OCI-LY7 (cell line): ENCODE measurements at regions of chr7 and their contacts with region 1.

Region 1: GRCh38 chr7:65872776-65873581 is at the start of gene VKORC1L1:
- DNase-seq: peak; percentile 95
- H3K4me3 ChIP-seq: peak within 1 kb of the TSS; percentile 98
- H3K27ac ChIP-seq: peak within 1 kb of the TSS; percentile 66
- H3K4me1 ChIP-seq: peaks cover 10% of the 10 kb centered on the region
- CTCF ChIP-seq: no peak
- total RNA-seq, gene VKORC1L1: 12.1 and 17.4 TPM in 2 replicates

Region 2: DNA sequence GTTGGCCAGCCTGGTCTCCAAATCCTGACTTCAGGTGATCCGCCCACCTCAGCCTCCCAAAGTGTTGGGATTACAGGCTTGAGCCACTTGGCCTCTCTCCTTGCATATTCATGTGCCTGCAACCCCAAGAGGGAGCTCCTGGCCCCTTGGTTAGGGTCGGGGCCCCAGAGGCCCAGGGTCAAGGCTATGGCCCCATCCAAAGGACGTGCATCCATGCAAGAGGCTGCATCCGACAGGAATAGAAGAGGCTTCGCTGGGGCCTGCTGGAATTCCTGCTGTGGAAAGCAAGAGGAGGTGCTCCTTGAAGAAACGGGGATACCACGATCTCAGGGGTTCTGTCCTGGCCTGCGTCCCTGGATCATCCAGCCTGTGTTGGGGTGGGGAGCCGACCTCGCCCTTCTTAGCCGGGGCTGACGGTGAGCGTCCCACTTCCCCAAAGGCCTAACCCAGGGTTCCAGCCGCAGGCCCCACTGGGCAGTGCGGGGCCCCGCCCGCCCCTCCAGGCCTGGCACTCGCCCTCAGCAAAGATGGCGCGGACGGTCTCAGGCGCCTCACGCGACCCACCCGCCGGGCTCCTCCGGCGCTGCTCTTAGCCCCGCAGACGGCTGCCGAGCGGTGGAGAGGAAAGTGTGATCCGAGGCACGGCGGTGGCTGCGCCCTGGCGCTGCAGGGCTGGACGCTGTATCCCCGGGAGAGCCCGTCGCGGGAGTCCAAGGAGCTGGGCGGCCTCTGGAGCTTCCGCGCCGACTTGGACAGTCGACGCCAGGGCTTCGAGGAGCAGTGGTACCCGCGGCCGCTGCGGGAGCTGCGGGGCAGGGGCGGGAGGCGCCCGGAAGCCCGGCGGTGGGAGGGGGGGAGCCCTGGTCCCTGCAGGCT is 1773.1 kb before region 1 on chr7:
- CTCF ChIA-PET with region 1: no interaction called
- POLR2A ChIA-PET with region 1: no interaction called
- intact Hi-C with region 1: no loop called
- DNase-seq: no peak
- H3K4me3 ChIP-seq: no peak overlapping the region
- H3K27ac ChIP-seq: no peak overlapping the region
- H3K4me1 ChIP-seq: no peaks in the 10 kb centered on the region
- CTCF ChIP-seq: no peak

Region 3: DNA sequence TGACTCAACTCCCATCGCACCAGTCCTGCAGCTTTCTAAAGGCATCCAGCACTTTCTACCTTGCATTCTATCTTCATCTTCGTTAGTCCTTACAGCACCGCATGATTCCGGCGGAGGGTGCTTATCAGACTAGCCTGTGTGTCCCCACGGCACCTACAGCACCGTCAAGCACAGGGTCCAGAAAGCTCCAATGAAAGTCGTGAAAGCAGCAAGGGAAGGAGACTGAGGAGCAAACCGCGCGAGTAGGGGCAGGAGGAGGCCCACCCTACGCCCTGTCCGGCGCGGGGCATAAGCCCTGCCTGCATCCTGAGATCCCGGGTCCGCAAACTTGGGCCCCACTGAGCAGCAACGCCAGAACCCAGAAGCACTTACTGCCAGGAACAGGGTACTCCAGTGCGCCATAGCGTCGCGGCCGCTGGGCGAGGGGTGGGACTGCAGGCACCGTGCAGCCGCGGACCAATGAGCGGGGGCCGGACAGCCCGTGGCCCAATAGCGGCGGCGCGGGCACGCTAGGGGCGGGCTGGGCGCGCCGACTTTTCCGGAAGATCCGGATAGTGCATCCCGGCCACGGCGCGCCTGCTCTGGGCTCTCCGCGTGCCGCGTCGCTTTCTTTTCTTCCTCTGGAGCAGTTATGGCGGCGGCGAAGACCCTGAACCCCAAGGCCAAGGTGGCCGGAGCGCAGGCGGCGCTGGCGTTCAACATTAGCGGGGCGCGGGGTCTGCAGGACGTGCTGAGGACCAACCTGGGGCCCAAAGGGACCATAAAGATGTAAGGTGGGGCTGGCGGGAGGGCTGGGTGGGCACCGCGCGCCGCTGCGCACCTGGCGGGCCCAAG is 122.3 kb before region 1 on chr7:
- CTCF ChIA-PET with region 1: no interaction called
- POLR2A ChIA-PET with region 1: interaction called, 3 read pairs
- intact Hi-C with region 1: loop called (anchors 2 kb)
- DNase-seq: peak; percentile 92
- H3K4me3 ChIP-seq: peak overlapping the region; percentile 90
- H3K27ac ChIP-seq: peak overlapping the region; percentile 59
- H3K4me1 ChIP-seq: peaks cover 18% of the 10 kb centered on the region
- CTCF ChIP-seq: no peak

Region 4: GRCh38 chr7:65809259-65809981 is 63.6 kb before region 1 on chr7:
- CTCF ChIA-PET with region 1: no interaction called
- POLR2A ChIA-PET with region 1: no interaction called
- intact Hi-C with region 1: loop called (anchors 2 kb)
- DNase-seq: peak; percentile 79
- H3K4me3 ChIP-seq: peak overlapping the region; percentile 44
- H3K27ac ChIP-seq: peak overlapping the region; percentile 84
- H3K4me1 ChIP-seq: peaks cover 31% of the 10 kb centered on the region
- CTCF ChIP-seq: no peak